ENCODE measurements at regions of chr4 and their contacts with region 1.

Region 1: DNA sequence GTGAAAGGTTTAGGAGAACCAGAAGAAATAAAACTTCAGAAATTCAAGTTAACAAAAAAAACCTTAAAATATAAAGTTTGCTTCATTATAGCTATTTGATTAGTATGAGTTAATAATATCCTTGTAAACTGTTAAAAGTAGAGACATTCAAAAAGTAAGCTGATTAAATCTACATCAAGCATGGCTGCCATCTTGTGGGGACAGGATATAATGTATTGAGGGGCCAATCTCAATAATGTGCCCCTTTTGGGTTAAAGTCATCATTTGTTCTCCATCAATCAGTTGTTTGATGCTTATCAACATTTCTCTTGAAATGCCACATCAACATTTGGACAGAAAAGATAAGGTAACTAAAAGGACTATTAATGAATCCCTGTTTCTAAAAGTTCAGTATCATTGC is 4.6 kb upstream of the GRID2 start:
- DNase-seq: no peak
- H3K4me3 ChIP-seq: no peak overlapping the region
- H3K27ac ChIP-seq: no peak overlapping the region
- H3K4me1 ChIP-seq: peaks cover 0 to 7% (median 4%) of the 10 kb centered on the region in 4 experiments; a peak in 4 of 7 replicates
- H3K27me3 ChIP-seq: no peaks in the 10 kb centered on the region
- CTCF ChIP-seq: peak in 1 of 3 experiments; percentile 37; a peak in 2 of 4 replicates
- EP300 ChIP-seq: no peak
- POLR2A ChIP-seq: no peak
- RAD21 ChIP-seq: peak; percentile 43 to 48

Region 2: GRCh38 chr4:92184566-92184965 is 114.6 kb before region 1 on chr4:
- CTCF ChIA-PET with region 1: no interaction called
- POLR2A ChIA-PET with region 1: no interaction called
- DNase-seq: no peak
- H3K4me3 ChIP-seq: no peak overlapping the region
- H3K27ac ChIP-seq: no peak overlapping the region
- H3K4me1 ChIP-seq: no peaks in the 10 kb centered on the region
- H3K27me3 ChIP-seq: no peaks in the 10 kb centered on the region
- CTCF ChIP-seq: no peak
- EP300 ChIP-seq: no peak
- POLR2A ChIP-seq: no peak
- RAD21 ChIP-seq: no peak

Region 3: DNA sequence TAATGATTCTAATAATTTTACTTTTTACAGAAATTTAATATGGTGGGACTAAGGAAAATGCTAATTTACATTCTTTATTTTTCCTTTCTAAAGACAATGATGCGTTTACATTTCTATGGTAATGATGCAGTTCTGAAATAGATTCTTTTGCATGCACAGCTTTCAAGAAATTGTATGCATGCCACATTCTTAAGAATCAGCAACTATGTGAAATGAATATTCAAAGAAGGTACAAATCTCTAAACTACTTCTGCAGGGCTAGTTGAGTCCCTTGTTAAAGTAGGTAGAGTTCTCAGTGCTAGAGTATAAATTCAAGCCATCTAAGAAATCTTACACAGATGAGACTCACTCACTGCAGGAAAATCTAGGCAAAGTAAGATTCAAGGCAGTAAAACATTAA is 19.9 kb before region 1 on chr4:
- CTCF ChIA-PET with region 1: interaction called, 17 read pairs
- POLR2A ChIA-PET with region 1: interaction called, 36 read pairs
- DNase-seq: no peak
- H3K4me3 ChIP-seq: peak overlapping the region in 1 of 4 experiments; percentile 97; a peak in 3 of 8 replicates
- H3K27ac ChIP-seq: peak overlapping the region; percentile 6; the same call in 1 of the 2 replicates
- H3K4me1 ChIP-seq: peaks cover 0 to 12% (median 1%) of the 10 kb centered on the region in 4 experiments; a peak in 3 of 7 replicates
- H3K27me3 ChIP-seq: peaks cover 0 to 1% (median 0%) of the 10 kb centered on the region in 4 experiments; a peak in 1 of 7 replicates
- CTCF ChIP-seq: no peak
- EP300 ChIP-seq: no peak
- POLR2A ChIP-seq: no peak
- RAD21 ChIP-seq: no peak